PC-3 (cell line): ENCODE measurements at regions of chr11 and their contacts with region 1.

Region 1: GRCh38 chr11:14022251-14022650 is 59.7 kb downstream of the SPON1 start:
- DNase-seq: peak; percentile 68
- ATAC-seq: peak; percentile 96
- H3K4me3 ChIP-seq: no peak overlapping the region
- H3K27ac ChIP-seq: no peak overlapping the region
- H3K4me1 ChIP-seq: peaks cover 24% of the 10 kb centered on the region
- H3K27me3 ChIP-seq: no peaks in the 10 kb centered on the region
- CTCF ChIP-seq: no peak

Region 2: DNA sequence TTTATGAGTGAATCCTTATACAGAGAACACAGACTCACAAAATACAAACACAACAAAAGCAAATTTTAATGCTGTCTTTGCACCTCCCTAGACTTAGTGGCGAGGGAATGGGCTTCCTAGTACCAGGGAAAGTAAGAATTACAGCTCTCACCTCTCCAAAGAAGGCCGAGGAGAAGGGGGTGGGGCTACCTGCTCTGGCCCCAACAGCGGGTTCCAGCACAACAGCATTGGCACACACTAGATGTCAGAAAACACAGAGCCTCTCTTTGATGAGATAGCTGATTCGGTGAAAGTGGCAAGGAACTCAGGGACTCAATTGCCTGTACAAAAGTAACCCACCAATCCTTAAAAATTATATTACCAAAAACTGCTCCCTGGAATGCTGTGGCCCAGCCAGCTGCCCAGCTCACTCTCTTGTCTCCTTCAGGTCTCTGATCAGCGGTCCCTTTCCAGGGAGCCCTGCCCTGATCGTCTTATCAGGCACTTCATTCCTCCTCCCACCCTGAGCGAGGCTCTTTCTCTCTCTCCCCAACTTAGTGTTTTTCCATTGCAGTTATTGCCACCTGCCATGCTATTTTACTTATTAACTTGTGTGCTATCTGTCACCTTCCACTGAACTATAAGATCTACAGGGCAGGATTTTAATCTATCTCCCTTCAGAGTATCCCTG is 29.0 kb before region 1 on chr11:
- CTCF ChIA-PET with region 1: no interaction called
- POLR2A ChIA-PET with region 1: no interaction called
- intact Hi-C with region 1: loop called (anchors 2 kb)
- DNase-seq: no peak
- ATAC-seq: no peak
- H3K4me3 ChIP-seq: no peak overlapping the region
- H3K27ac ChIP-seq: no peak overlapping the region; the same call in 1 of the 2 replicates
- H3K4me1 ChIP-seq: peaks cover 25% of the 10 kb centered on the region
- H3K27me3 ChIP-seq: no peaks in the 10 kb centered on the region
- CTCF ChIP-seq: no peak

Region 3: DNA sequence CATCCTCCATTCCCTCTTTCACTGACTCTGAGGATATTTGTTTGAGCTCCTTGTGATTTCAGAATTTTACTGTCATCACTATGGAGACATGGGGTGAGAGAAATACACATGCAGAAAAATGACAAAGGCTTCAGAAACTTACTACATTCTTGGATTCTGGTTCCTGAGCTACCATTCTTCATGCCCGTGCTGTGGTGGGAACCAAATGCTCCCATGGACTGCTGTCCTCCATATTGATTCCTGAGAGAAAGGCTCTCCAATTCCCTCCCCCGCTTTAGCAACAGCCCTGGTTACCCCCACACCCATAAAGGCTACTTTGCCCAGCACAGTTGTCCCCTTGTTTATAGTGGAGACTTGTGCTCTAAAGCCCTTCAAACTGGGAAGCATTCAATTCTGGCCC is 141.3 kb after region 1 on chr11:
- CTCF ChIA-PET with region 1: no interaction called
- POLR2A ChIA-PET with region 1: no interaction called
- intact Hi-C with region 1: no loop called
- DNase-seq: no peak
- ATAC-seq: no peak
- H3K4me3 ChIP-seq: no peak overlapping the region
- H3K27ac ChIP-seq: no peak overlapping the region
- H3K4me1 ChIP-seq: no peaks in the 10 kb centered on the region
- H3K27me3 ChIP-seq: no peaks in the 10 kb centered on the region
- CTCF ChIP-seq: no peak